Activated CD4-positive, alpha-beta T cell treated with anti-CD3 and anti-CD28 coated beads for 36 hours (primary cell): ENCODE measurements at regions of chr3 and their contacts with region 1.

Region 1: DNA sequence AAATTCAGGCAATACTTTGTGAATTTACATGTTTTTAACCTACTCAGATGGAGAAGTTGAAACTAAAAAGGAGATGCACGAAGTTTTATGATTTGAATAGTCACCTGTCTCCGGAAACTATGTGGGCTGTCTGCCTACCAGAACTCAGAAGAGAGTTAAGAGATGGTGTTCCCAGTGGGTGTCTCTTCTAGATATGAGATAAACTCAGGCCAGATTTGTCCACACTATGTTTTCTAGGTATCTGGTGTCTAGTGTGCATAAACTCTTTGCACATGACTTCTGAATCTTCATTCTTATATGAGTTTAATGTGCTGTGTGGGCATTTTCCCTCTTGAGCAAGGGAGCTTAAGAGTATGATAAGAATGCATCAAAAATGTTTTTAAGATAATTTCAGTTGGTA is 222.8 kb downstream of the FOXP1 start:
- DNase-seq: peak; percentile 48
- ATAC-seq: peak; percentile 67
- H3K4me3 Mint-ChIP-seq: peak overlapping the region; percentile 50
- H3K27ac Mint-ChIP-seq: peak overlapping the region; percentile 88
- H3K4me1 Mint-ChIP-seq: peaks cover 86% of the 10 kb centered on the region
- H3K27me3 Mint-ChIP-seq: no peaks in the 10 kb centered on the region

Region 2: DNA sequence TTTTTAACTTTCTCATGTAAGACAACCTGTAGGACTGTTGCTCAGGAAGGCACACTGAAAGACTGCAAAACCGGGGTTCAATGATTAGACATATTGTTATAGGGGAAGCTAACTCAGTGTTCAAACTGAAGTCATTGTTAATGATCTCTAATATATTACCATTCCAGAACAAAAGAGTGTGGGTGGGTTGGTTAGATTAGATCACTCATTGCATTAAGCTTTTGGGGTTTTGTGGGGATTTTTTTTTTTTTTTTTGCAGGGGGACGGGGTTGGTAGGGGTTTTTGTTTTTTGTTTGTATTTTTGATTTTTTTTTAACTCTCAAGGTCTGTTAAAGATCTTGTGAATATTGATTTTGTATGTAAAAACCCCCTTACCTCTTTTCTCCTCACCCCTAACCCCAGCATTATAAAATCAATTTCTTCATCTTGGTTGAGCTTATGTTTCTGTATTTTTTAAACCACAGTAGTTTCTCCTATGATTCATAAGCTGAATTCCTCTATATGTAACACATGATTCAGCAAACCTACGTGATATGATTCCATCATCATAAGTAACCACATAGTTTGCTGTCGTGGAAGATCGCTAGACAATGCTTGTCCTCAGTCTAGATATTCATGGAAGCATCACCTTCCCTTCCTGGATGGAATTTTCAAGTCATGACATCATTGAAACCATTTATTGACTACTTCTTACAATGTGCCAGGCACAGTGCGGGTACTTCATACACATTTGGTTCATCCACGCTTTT is 504.2 kb before region 1 on chr3:
- CTCF ChIA-PET with region 1: no interaction called
- POLR2A ChIA-PET with region 1: no interaction called
- intact Hi-C with region 1: loop called in 1 of 2 experiments (anchors 1 kb)
- DNase-seq: peak; percentile 8
- ATAC-seq: peak; percentile 84
- H3K4me3 Mint-ChIP-seq: no peak overlapping the region
- H3K27ac Mint-ChIP-seq: no peak overlapping the region
- H3K4me1 Mint-ChIP-seq: peaks cover 24% of the 10 kb centered on the region
- H3K27me3 Mint-ChIP-seq: peaks cover 33% of the 10 kb centered on the region

Region 3: GRCh38 chr3:71064288-71064955 is 296.3 kb before region 1 on chr3:
- CTCF ChIA-PET with region 1: no interaction called
- POLR2A ChIA-PET with region 1: interaction called, 13 read pairs
- intact Hi-C with region 1: loop called (anchors 1 to 5 kb)
- DNase-seq: peak; percentile 79
- ATAC-seq: peak; percentile 11
- H3K4me3 Mint-ChIP-seq: no peak overlapping the region
- H3K27ac Mint-ChIP-seq: no peak overlapping the region
- H3K4me1 Mint-ChIP-seq: peaks cover 63% of the 10 kb centered on the region
- H3K27me3 Mint-ChIP-seq: no peaks in the 10 kb centered on the region

Region 4: GRCh38 chr3:71087143-71088018 is 273.4 kb before region 1 on chr3:
- CTCF ChIA-PET with region 1: no interaction called
- POLR2A ChIA-PET with region 1: no interaction called
- intact Hi-C with region 1: loop called (anchors 1 kb)
- DNase-seq: peak; percentile 61
- ATAC-seq: peak; percentile 74
- H3K4me3 Mint-ChIP-seq: peak overlapping the region; percentile 52
- H3K27ac Mint-ChIP-seq: peak overlapping the region; percentile 93
- H3K4me1 Mint-ChIP-seq: peaks cover 94% of the 10 kb centered on the region
- H3K27me3 Mint-ChIP-seq: no peaks in the 10 kb centered on the region

Region 5: DNA sequence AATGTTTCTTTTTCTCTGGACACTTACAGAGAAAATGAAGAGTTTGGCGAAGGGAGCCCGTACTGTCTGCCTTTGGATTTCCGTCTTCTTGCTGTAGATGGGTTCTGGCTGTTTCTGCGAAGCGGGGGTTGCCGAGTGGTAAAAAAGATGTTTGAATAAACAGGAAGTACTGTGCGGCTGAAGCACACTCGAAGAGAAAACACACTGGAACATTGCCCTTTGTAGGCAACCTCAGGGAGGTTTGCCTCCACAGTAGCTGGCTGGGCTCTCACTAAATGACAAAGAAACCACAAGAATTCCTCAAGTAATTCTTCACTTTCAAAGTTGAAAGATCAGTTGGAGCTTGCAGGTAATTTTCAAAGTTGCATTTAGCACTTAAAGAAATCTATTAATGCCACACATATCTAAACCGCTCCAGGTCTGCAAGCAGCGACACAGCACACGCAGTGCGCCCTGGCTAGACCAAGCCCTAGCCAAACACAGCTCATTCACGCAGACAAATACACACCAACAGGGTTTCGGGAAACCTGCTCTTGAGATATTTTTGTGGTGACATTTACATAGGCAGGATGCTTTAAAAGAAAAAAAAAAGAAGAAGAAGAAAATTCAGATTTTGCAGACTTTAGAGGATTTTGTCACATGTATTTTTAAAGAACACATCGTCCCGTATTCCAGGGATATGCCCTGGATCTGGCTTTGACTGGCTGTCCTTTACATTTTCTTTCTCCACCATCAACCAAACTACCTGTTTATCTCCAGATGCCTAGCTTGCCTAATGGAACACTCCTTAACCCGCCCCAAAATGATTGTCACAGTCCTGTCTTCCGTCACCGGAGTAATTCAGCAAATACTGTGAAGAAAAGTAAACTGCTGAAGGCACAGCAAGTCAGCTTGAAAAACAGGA is 230.0 kb before region 1 on chr3:
- CTCF ChIA-PET with region 1: no interaction called
- POLR2A ChIA-PET with region 1: no interaction called
- intact Hi-C with region 1: loop called (anchors 1 kb)
- DNase-seq: peak; percentile 82
- ATAC-seq: peak; percentile 61
- H3K4me3 Mint-ChIP-seq: peak overlapping the region; percentile 90
- H3K27ac Mint-ChIP-seq: peak overlapping the region; percentile 99
- H3K4me1 Mint-ChIP-seq: peaks cover 71% of the 10 kb centered on the region
- H3K27me3 Mint-ChIP-seq: no peaks in the 10 kb centered on the region

Region 6: DNA sequence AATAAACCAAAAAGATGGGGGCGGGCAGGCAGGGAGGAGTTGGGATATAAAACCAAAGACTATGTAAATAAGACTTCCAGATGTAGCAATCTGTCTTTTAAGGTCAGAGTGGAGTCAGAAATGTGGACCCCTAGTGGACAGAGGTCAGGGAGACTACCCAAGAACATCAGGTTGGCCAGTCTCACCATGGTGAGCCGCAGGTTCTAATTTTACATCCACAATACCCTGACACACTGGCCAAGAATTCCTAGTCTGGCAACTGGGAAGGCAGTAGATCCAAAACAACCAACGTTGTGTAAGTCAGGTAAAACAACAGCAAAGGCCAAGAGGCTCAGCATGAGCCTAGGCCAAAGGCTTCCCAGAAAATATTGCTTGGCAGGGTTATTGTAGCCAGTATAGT is 19.3 kb after region 1 on chr3:
- CTCF ChIA-PET with region 1: interaction called, 6 read pairs
- POLR2A ChIA-PET with region 1: interaction called, 9 read pairs
- intact Hi-C with region 1: loop called (anchors 1 kb)
- DNase-seq: no peak
- ATAC-seq: no peak
- H3K4me3 Mint-ChIP-seq: no peak overlapping the region
- H3K27ac Mint-ChIP-seq: peak overlapping the region; percentile 7
- H3K4me1 Mint-ChIP-seq: peaks cover 91% of the 10 kb centered on the region
- H3K27me3 Mint-ChIP-seq: no peaks in the 10 kb centered on the region

Region 7: DNA sequence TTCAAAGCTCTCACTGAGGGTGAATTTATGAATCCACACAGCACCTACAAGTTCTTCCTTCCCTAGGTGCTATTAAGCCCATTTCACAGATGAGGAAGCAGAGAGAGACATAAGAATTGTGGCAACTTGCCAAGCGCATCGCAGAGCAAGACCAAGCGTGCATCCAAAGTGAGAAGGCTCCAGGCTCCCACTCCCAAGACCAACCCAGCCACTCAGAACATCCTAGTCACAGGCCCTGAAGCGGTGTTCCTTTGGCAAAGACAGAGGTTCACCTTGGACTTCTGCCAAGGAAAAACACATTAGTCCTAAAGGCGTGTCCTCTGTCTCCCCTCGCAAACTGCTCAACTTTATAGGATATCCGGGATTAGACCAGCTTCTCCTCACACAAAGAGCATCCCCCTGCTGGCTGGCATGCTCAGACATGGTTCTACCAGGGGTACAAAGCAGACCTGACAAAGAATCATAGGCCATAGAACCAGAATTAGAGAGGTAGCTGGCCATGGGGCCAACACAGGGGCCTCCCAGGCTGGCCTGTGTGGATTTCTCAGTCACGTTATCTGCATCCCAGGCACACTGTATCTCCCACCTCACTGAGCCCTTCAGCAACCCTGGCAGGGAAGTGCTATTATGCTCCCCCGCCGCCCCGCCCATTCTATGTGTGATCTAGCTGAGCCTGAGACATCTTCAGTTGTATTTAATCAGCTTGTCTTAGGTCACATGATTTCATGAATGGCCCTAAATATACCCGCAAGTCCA is 62.6 kb after region 1 on chr3:
- CTCF ChIA-PET with region 1: interaction called, 3 read pairs
- POLR2A ChIA-PET with region 1: interaction called, 5 read pairs
- intact Hi-C with region 1: loop called (anchors 1 to 2 kb)
- DNase-seq: no peak
- ATAC-seq: no peak
- H3K4me3 Mint-ChIP-seq: no peak overlapping the region
- H3K27ac Mint-ChIP-seq: peak overlapping the region; percentile 92
- H3K4me1 Mint-ChIP-seq: peaks cover 94% of the 10 kb centered on the region
- H3K27me3 Mint-ChIP-seq: no peaks in the 10 kb centered on the region

Region 8: DNA sequence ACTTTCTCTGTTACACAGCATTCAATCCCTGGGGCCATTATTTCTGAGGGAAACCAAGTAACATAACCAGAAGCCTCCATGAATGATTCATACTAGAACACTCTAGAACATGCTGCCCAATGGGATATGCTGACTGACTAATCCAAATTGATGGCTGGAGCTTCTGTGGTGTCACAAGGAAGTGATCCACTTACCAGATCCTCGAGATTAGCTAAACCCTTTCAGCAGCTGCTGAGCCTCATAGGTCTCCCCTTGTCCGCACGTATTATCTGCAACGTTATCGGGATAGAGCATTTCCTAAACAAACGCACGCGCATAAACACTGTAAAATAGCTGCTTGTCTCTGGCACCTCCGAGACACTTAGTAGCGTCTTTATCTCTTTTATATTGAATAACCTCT is 485.4 kb after region 1 on chr3:
- CTCF ChIA-PET with region 1: no interaction called
- POLR2A ChIA-PET with region 1: no interaction called
- intact Hi-C with region 1: no loop called
- DNase-seq: no peak
- ATAC-seq: no peak
- H3K4me3 Mint-ChIP-seq: no peak overlapping the region
- H3K27ac Mint-ChIP-seq: no peak overlapping the region
- H3K4me1 Mint-ChIP-seq: no peaks in the 10 kb centered on the region
- H3K27me3 Mint-ChIP-seq: peaks cover 5% of the 10 kb centered on the region